ENCODE measurements at regions of chr5 and their contacts with region 1.

Region 1: GRCh38 chr5:80654391-80655230 is at the starts of genes DHFR and MSH3:
- DNase-seq: peak; percentile 63 to 73
- ATAC-seq: peak; percentile 55 to 66
- H3K4me3 ChIP-seq: peak within 1 kb of the TSS; percentile 62 to 95 (median 84)
- H3K27ac ChIP-seq: peak within 1 kb of the TSS; percentile 79 to 97 (median 92)
- H3K4me1 ChIP-seq: peaks cover 16 to 19% of the 10 kb centered on the region in 2 donors
- H3K27me3 ChIP-seq: no peaks in the 10 kb centered on the region
- CTCF ChIP-seq: peak in 3 of 5 experiments; percentile 23 to 42 (median 35)
- POLR2A ChIP-seq: peak; percentile 35 to 67
- total RNA-seq, gene DHFR: 2.2 to 5.3 (median 3.7) TPM
- total RNA-seq, gene MSH3: 5.8 to 10.4 (median 7.2) TPM

Region 2: GRCh38 chr5:80487829-80488721 is 166.5 kb before region 1 on chr5 and contains the start of gene FAM151B:
- in situ Hi-C with region 1: loop called in 1 of 4 experiments (anchors 25 kb)
- intact Hi-C with region 1: loop called (anchors 5 kb)
- DNase-seq: peak; percentile 74 to 84
- ATAC-seq: peak; percentile 92 to 95
- H3K4me3 ChIP-seq: peak within 1 kb of the TSS; percentile 66 to 98 (median 78)
- H3K27ac ChIP-seq: peak within 1 kb of the TSS; percentile 46 to 76 (median 70)
- H3K4me1 ChIP-seq: no peaks in the 10 kb centered on the region
- H3K27me3 ChIP-seq: no peaks in the 10 kb centered on the region
- CTCF ChIP-seq: peak in 1 of 5 experiments; percentile 7
- POLR2A ChIP-seq: peak in 1 of 2 donors; percentile 25
- total RNA-seq, gene FAM151B: 0.18 to 1.6 (median 1.1) TPM

Measured in gastrocnemius medialis (tissue), 4 donors.